Activated naive CD4-positive, alpha-beta T cell treated with anti-CD3 and anti-CD28 coated beads for 36 hours (primary cell): ENCODE measurements at regions of chr6 and their contacts with region 1.

Region 1: GRCh38 chr6:42050266-42051032 is at the start of gene TAF8:
- DNase-seq: peak; percentile 95
- H3K4me3 Mint-ChIP-seq: peak within 1 kb of the TSS; percentile 83
- H3K27ac Mint-ChIP-seq: peak within 1 kb of the TSS; percentile 88
- H3K4me1 Mint-ChIP-seq: peaks cover 64% of the 10 kb centered on the region
- H3K27me3 Mint-ChIP-seq: no peaks in the 10 kb centered on the region
- total RNA-seq, gene TAF8: 67.3 to 68.5 TPM

Region 2: DNA sequence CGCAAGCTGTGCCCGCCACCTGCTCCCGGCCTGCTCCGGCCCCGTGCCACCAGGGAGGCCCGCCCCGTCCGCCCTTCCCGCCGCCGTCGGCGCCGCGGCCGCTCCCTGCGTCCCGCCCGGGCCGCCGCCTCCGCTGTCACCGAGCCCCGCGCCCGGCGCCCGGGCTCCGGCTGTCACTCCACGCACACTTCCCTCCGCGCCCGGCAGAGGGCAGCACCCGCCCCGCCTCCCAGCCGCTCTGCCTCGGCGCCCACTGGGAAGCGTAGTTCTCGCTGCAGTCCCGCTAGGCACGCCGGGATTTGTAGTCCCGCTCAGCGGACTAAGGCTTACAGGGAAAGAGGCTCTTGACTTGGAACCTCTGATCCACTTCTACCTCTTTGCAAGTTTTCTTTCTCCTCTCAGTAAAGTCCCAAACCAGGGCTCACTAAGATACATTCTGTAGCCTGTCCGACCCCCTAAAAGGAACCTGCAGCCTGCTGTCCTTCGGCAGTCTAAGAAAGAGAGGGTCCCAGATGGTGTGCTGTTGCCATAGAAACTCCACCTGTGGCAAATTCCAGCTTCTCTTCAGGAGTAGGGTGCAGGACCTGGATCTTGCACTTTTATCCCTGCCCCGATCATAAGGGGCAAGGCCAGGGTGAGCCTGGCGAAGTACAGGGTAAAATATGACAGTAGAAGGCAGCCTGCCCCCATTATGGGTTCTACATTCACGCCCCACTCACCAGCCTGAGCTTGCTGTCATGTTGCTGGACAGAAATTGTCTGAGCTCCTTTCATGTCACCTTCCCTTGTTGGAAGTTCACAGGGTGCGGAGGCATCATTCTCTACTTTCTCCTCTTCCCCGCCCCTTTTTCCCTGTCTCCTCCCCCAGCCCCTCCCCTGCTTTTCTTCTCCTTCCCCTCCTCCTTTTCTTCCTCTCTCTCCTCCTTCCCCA is 314.8 kb before region 1 on chr6 and contains the start of gene TFEB:
- CTCF ChIA-PET with region 1: no interaction called
- intact Hi-C with region 1: loop called (anchors 1 kb)
- DNase-seq: peak; percentile 96
- H3K4me3 Mint-ChIP-seq: peak within 1 kb of the TSS; percentile 72
- H3K27ac Mint-ChIP-seq: no peak within 1 kb of the TSS
- H3K4me1 Mint-ChIP-seq: peaks cover 21% of the 10 kb centered on the region
- H3K27me3 Mint-ChIP-seq: no peaks in the 10 kb centered on the region
- total RNA-seq, gene TFEB: 5.7 to 7.9 TPM

Region 3: GRCh38 chr6:41878246-41878645 is 172.2 kb before region 1 on chr6:
- CTCF ChIA-PET with region 1: no interaction called
- intact Hi-C with region 1: no loop called
- DNase-seq: no peak
- H3K4me3 Mint-ChIP-seq: no peak overlapping the region
- H3K27ac Mint-ChIP-seq: no peak overlapping the region
- H3K4me1 Mint-ChIP-seq: no peaks in the 10 kb centered on the region
- H3K27me3 Mint-ChIP-seq: no peaks in the 10 kb centered on the region

Region 4: GRCh38 chr6:41901882-41902519 is 148.4 kb before region 1 on chr6:
- CTCF ChIA-PET with region 1: interaction called, 32 read pairs
- intact Hi-C with region 1: loop called (anchors 1 kb)
- DNase-seq: peak; percentile 82
- H3K4me3 Mint-ChIP-seq: no peak overlapping the region
- H3K27ac Mint-ChIP-seq: no peak overlapping the region
- H3K4me1 Mint-ChIP-seq: peaks cover 16% of the 10 kb centered on the region
- H3K27me3 Mint-ChIP-seq: no peaks in the 10 kb centered on the region

Region 5: DNA sequence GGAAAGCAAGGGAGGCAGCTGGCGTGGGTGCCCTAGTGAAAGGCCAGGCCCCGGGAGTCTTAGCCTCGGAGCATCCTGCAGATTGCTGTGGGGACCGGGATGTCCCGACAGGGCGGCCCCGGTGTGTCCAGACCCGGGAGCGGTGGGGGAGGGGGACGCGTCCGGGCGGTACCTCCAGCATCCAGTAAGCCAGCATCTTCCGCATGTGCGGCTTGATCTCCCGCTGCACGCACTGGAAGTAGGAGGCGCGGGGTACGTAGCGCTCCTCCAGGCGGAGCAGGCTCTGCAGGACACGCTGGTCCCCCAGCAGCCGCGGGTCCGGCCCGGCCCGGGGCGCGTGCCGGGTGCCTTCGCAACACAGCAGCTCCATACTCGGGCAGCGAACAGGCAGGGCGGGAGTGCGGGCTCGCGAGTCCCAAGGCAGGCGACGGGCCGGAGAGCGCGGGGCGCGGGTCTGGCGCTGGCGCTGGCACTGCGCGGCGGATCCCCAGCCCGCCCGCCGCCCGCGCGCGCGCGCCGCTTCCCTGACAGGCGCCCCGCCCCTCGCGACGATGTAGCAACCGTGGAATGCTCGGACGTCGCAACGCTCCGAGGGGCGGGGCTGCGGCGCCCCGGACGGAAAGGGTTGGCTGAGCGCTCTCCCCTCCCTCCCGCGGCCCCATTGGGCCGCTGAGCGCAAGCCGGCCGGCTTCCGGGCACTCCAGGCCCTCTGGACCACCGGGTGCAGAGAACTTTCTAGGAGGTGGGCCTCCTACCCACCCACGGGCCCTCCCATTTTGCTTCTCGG is 109.0 kb before region 1 on chr6 and contains the start of gene CCND3:
- CTCF ChIA-PET with region 1: interaction called, 296 read pairs
- intact Hi-C with region 1: no loop called
- DNase-seq: peak; percentile 93
- H3K4me3 Mint-ChIP-seq: peak within 1 kb of the TSS; percentile 100
- H3K27ac Mint-ChIP-seq: peak within 1 kb of the TSS; percentile 99
- H3K4me1 Mint-ChIP-seq: peaks cover 47% of the 10 kb centered on the region
- H3K27me3 Mint-ChIP-seq: no peaks in the 10 kb centered on the region
- total RNA-seq, gene CCND3: 1,152 to 1,165 TPM